ENCODE measurements at regions of chr1 and their contacts with region 1.

Region 1: DNA sequence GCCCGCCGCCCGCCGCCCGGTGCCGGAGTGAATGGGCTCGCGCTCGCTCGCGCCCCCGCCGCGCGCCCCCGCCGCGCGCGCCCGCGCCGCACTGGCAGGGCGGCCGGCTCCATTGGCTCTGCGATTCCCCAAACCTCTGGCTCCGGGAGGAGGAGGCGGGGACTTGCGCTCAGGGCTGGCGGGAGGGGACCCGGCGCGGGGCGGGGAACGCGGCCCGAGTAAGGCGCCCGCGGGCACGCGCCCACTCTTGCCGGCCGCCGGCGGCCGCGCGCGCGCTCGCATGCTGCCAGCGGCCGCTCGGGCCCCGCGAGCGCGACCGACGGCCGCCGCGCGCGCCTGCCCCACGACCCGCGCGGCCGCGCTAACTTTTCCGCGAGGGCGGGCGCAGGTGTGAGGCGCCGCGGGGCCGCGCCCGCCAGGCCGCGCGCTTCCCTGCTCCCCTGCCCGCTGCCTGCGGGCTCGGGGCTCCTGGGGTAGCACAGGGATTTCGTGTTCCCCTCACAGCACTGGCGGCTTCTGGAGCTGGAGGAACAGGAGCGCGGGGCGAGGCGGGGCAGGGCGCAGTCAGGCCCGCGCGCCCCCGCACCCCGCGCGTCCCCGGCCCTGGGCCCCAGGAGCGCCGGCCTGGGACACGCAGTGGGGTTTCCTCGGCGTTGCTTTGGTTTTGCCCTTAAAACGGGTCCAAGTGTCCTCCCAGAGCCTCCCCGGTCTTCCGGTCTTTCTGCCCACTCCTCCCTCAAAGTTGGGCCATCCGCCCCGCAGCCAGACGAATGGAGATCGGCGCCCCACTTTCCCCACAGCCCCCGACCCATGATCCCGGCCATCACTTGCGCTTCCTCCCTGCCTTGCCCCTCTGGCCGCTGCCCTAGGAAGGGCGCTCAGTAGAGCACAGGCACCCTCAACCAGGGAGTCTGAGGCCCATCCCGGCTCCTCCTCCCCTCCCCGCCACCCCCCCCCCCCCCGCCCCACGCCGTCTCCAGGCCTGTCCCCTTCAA is 101.5 kb downstream of the CASZ1 start:
- DNase-seq: peak; percentile 83
- ATAC-seq: peak; percentile 55
- H3K4me3 Mint-ChIP-seq: peak overlapping the region; percentile 57
- H3K27ac Mint-ChIP-seq: no peak overlapping the region
- H3K4me1 Mint-ChIP-seq: peaks cover 36% of the 10 kb centered on the region
- H3K27me3 Mint-ChIP-seq: peaks cover 2% of the 10 kb centered on the region

Region 2: GRCh38 chr1:9823943-9824701 is 870.8 kb before region 1 on chr1 and contains the start of gene CLSTN1:
- CTCF ChIA-PET with region 1: no interaction called
- POLR2A ChIA-PET with region 1: no interaction called
- intact Hi-C with region 1: loop called in 1 of 2 experiments (anchors 2 kb)
- DNase-seq: peak; percentile 96
- ATAC-seq: peak; percentile 72
- H3K4me3 Mint-ChIP-seq: peak within 1 kb of the TSS; percentile 96
- H3K27ac Mint-ChIP-seq: peak within 1 kb of the TSS; percentile 89
- H3K4me1 Mint-ChIP-seq: peaks cover 35% of the 10 kb centered on the region
- H3K27me3 Mint-ChIP-seq: peaks cover 9% of the 10 kb centered on the region
- total RNA-seq, gene CLSTN1: 34.9 to 36.7 TPM

Region 3: DNA sequence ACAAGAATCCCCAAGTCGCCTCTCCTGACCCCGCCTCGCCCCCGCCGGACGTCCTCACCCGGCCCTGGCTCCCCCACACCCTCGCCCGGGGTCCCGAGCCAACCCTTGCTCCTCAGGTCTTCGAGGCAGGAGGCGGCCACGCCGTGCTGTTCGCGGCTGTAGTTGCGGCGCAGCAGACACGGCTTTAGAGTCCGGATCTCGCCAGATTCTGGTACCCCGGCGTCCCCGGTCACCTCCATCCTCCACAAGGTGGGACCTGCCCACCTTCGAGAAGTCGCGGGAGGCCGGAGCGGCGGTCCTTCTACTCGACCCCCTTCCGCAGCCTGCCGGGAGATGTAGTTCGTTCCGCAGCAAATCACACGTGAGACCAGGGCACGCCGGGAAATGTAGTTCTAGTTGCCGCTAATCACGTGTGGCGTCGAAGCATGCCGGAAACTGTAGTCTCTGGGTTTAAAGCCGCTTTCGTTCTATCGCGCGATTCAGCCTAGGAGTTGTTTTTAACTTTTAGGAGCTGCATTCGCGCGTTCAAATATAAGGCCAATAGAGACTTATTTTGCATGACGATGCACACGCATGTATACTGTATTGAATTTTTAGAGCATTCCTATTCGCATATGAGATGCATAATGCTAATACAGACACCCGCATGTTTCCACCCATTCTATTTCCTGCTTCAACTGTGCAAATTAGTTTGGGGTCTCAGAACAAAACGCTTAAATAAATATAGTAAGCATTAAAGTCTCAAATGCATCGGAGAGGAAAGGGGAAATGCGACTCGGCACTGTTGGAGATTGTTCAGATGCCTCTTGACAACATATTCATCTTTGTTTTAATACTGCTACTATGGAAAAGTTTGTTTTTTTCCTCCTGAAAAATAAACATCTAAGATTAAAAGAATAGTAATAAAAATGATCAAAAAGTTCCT is 222.4 kb before region 1 on chr1 and contains the start of gene DFFA:
- CTCF ChIA-PET with region 1: no interaction called
- POLR2A ChIA-PET with region 1: no interaction called
- intact Hi-C with region 1: loop called in 1 of 2 experiments (anchors 1 kb)
- DNase-seq: peak; percentile 96
- ATAC-seq: peak; percentile 83
- H3K4me3 Mint-ChIP-seq: peak within 1 kb of the TSS; percentile 97
- H3K27ac Mint-ChIP-seq: peak within 1 kb of the TSS; percentile 92
- H3K4me1 Mint-ChIP-seq: peaks cover 38% of the 10 kb centered on the region
- H3K27me3 Mint-ChIP-seq: no peaks in the 10 kb centered on the region
- total RNA-seq, gene DFFA: 45.7 to 46.4 TPM

Region 4: GRCh38 chr1:10731041-10731440 is 36.1 kb after region 1 on chr1:
- CTCF ChIA-PET with region 1: no interaction called
- POLR2A ChIA-PET with region 1: no interaction called
- intact Hi-C with region 1: loop called in 1 of 2 experiments (anchors 1 kb)
- DNase-seq: peak; percentile 29
- ATAC-seq: peak; percentile 63
- H3K4me3 Mint-ChIP-seq: no peak overlapping the region
- H3K27ac Mint-ChIP-seq: no peak overlapping the region
- H3K4me1 Mint-ChIP-seq: peaks cover 20% of the 10 kb centered on the region
- H3K27me3 Mint-ChIP-seq: no peaks in the 10 kb centered on the region

Region 5: DNA sequence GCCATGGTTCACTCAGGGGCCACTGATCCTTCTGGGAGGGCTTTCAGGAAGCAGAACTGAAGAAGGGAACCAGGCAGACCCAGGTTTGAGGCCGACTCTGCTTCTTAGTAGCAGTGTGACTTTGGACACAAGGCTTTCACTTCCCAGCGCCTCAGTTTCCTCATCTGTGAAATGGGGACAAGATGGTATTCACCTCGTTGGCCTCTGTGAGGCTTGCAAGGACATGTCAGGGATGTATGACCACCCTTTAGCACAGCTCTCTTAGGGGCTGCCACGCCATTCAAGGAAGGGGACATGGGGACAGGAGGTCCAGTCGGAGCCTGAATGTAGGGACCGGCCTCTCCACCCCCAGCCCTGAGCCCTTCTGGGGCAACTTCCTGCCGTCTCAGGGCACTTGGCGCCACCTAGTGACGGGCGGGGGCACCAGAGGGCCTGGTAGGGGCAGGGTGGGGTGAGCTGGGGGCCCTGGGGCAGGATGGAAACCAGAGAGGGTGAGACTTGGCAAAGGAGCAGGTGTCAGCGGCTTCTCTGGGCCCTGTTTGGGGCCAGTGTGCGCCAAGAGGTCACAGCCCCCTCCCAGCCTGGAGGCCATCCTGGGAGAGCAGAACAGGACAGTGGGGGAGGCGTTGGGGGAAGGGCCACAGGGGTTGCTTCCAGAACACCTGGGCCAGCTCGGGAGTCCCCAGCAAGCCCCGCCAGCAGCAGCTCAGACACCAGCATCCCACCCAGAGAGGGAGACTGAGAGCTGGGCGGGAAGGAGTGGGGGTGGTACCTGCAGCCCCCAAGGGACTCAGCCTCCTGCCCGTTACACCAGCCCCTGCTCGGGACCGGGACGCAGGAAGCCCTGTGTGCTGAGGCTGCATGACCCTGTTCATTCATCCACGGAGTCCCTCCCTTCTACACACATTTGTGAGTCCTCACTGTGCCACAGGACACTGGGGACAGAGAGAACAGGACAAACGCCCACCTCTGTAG is 215.1 kb after region 1 on chr1:
- CTCF ChIA-PET with region 1: interaction called, 3 read pairs
- POLR2A ChIA-PET with region 1: no interaction called
- intact Hi-C with region 1: loop called in 1 of 2 experiments (anchors 2 kb)
- DNase-seq: peak; percentile 86
- ATAC-seq: peak; percentile 83
- H3K4me3 Mint-ChIP-seq: no peak overlapping the region
- H3K27ac Mint-ChIP-seq: no peak overlapping the region
- H3K4me1 Mint-ChIP-seq: peaks cover 4% of the 10 kb centered on the region
- H3K27me3 Mint-ChIP-seq: peaks cover 7% of the 10 kb centered on the region